BJ (cell line): ENCODE measurements at regions of chr9 and their contacts with region 1.

Region 1: GRCh38 chr9:34252670-34253459 is 74.0 kb downstream of the UBAP1 start:
- DNase-seq: no peak
- H3K4me3 ChIP-seq: no peak overlapping the region
- H3K27me3 ChIP-seq: no peaks in the 10 kb centered on the region
- CTCF ChIP-seq: peak; percentile 94

Region 2: GRCh38 chr9:34084562-34084961 is 168.3 kb before region 1 on chr9:
- CTCF ChIA-PET with region 1: interaction called, 13 read pairs
- POLR2A ChIA-PET with region 1: no interaction called
- DNase-seq: no peak
- H3K4me3 ChIP-seq: no peak overlapping the region
- H3K27me3 ChIP-seq: no peaks in the 10 kb centered on the region
- CTCF ChIP-seq: no peak

Region 3: DNA sequence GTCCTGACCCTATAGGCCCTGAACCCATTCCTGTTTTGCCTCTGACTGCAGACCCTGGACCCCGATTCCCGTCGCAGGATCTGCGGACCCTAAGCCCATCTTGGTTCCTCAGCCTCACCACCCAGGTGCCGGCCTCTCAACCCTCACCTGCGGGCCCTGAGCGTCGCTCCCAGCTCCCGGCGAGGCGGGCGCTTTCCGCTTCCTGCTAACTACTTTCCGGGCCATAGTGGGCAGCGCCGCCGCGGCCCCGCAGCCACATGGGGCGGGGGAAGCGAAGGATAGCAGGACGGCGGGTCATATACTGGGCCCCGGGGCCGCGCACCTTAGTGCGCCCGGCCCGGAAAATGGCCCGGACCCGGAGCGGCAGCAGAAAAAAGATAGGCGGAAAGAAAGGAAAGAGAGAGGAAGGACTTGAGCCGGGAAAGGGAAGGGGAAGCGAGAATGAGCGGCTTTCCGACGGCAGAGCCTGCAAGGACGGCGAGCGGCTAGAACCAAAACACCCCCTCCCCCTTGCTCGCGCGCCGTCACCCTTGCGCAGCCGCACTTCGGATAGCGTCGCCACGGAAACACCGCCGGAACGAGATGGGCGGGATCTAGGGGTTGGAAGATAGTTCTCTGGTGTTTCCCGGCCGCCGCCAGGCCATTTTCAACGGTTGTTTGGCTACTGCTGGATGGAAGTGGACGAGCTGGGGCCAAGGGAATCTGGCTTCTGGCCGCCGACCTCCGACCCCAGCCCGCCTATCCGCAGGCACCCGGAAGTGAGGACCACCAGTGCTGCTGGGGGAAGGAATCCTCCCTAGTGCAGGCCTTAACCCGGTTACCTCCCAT is 126.4 kb before region 1 on chr9 and contains the start of gene DCAF12:
- CTCF ChIA-PET with region 1: interaction called, 15 read pairs
- POLR2A ChIA-PET with region 1: no interaction called
- DNase-seq: peak; percentile 46
- H3K4me3 ChIP-seq: peak within 1 kb of the TSS; percentile 63
- H3K27me3 ChIP-seq: no peaks in the 10 kb centered on the region
- CTCF ChIP-seq: peak; percentile 21; the same call in 1 of the 2 replicates
- polyA plus RNA-seq, gene DCAF12: 29.4 and 37.0 TPM in 2 replicates

Region 4: DNA sequence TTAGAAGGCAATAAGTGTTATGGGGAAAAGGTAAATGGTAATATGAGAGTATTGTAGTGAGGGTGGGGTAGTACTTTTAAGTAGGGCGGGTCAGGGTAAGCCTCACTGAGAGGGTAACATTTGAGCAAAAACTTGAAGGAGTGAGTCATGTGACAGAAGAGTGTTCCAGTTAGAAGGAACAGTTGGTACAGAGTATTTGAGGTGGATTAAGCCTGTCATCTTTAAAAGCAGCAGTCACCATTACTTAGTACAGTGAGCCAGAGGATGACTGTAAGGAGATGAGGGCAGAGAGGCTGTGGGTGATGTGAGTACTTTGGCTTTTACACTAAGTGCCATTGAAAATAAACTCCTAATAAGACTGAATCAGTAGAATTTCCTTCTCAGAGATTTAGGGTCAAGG is 19.2 kb before region 1 on chr9:
- CTCF ChIA-PET with region 1: interaction called, 55 read pairs
- POLR2A ChIA-PET with region 1: no interaction called
- DNase-seq: no peak
- H3K4me3 ChIP-seq: no peak overlapping the region
- H3K27me3 ChIP-seq: no peaks in the 10 kb centered on the region
- CTCF ChIP-seq: no peak

Region 5: DNA sequence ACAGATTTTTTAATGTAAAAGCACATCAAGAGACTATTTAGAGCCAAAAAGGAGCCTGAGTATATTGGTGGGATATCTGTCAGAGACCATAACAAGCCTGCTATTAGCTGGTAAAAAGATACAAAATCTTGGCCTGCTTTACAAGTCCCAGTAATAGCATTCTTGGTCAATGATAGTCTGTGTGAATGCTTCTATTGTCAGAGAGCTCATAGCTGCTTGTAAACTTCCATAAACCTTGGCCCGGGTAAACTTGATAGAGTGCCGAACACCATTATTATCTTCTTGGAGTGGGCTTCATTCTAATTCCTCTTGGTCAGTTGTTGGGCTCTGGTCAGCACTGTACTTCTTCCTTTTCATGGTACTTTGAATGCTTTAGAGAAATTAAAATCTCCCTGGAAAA is 10.0 kb before region 1 on chr9:
- CTCF ChIA-PET with region 1: interaction called, 55 read pairs
- POLR2A ChIA-PET with region 1: no interaction called
- DNase-seq: no peak
- H3K4me3 ChIP-seq: no peak overlapping the region
- H3K27me3 ChIP-seq: no peaks in the 10 kb centered on the region
- CTCF ChIP-seq: no peak

Region 6: GRCh38 chr9:34267660-34268059 is 14.8 kb after region 1 on chr9:
- CTCF ChIA-PET with region 1: interaction called, 57 read pairs
- POLR2A ChIA-PET with region 1: no interaction called
- DNase-seq: no peak
- H3K4me3 ChIP-seq: no peak overlapping the region
- H3K27me3 ChIP-seq: no peaks in the 10 kb centered on the region
- CTCF ChIP-seq: no peak

Region 7: GRCh38 chr9:34376596-34377403 is 123.9 kb after region 1 on chr9 and contains the start of gene MYORG:
- CTCF ChIA-PET with region 1: interaction called, 53 read pairs
- POLR2A ChIA-PET with region 1: no interaction called
- DNase-seq: peak; percentile 50
- H3K4me3 ChIP-seq: peak within 1 kb of the TSS; percentile 57
- H3K27me3 ChIP-seq: peaks cover 7% of the 10 kb centered on the region
- CTCF ChIP-seq: no peak
- polyA plus RNA-seq, gene MYORG: 0.21 and 0.22 TPM in 2 replicates